K562 (cell line): ENCODE measurements at regions of chr4 and their contacts with region 1.

Region 1: GRCh38 chr4:83455281-83456129 is at the starts of genes HELQ and MRPS18C:
- DNase-seq: peak; percentile 94 to 99 (median 96)
- ATAC-seq: peak; percentile 94
- H3K4me3 ChIP-seq: peak within 1 kb of the TSS; percentile 68
- H3K27ac ChIP-seq: peak within 1 kb of the TSS; percentile 99
- H3K4me1 ChIP-seq: no peaks in the 10 kb centered on the region; a peak in 1 of 5 replicates
- H3K27me3 ChIP-seq: no peaks in the 10 kb centered on the region
- CTCF ChIP-seq: peak; percentile 27 to 37 (median 31); a peak in 3 of 6 replicates
- EP300 ChIP-seq: peak; percentile 64
- POLR2A ChIP-seq: peak; percentile 96
- RAD21 ChIP-seq: peak; percentile 2 to 30; a peak in 1 of 4 replicates
- polyA plus RNA-seq, gene HELQ: 3.5 to 5.6 TPM
- polyA plus RNA-seq, gene MRPS18C: 329 to 390 TPM

Region 2: DNA sequence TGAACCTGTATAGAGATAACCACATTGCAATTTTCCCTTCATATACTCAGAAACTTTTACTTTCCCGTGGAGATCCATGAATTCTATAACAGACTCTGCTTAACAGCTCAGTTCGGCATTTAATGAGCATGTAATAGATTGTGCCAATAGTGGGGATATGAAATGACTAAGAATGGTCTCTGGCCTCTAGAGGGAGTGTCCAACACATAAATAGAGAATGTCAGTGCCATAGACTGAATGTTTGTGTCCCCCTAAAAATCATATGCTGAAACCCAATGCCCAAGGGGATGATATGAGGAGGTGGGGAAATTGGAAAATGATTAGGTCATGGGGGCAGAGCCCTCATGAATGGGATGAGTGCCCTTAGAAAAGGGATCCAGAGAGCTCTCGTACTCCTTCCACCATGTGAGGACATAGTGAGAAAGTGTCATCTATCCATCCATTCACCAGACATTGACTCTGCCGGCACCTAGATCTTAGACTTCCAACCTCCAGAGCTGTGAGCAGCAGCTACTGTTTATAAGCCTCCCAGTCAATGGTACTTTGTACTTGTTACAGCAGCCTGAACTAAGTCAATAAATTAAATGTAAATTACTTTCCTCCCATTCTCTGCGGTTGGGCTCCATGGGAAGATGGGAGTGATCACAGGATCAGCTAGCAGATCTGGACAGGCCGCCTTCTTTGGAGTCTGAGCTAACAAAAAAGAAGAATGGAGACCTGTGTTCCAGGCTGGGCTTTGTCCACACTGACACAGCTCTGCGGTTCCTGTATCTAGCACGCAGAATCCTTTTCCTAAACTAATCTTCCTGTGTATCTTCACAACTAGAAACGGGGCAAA is 92.8 kb before region 1 on chr4:
- CTCF ChIA-PET with region 1: no interaction called
- POLR2A ChIA-PET with region 1: interaction called, 3 read pairs
- in situ Hi-C with region 1: no loop called
- intact Hi-C with region 1: loop called (anchors 2 kb)
- DNase-seq: peak in 2 of 4 experiments; percentile 16 to 38
- ATAC-seq: peak; percentile 86
- H3K4me3 ChIP-seq: no peak overlapping the region
- H3K27ac ChIP-seq: no peak overlapping the region
- H3K4me1 ChIP-seq: peaks cover 0 to 7% of the 10 kb centered on the region in 2 experiments; a peak in 2 of 5 replicates
- H3K27me3 ChIP-seq: peaks cover 0 to 10% of the 10 kb centered on the region in 2 experiments; a peak in 4 of 5 replicates
- CTCF ChIP-seq: peak; percentile 24 to 60 (median 58); a peak in 5 of 6 replicates
- EP300 ChIP-seq: no peak
- POLR2A ChIP-seq: no peak
- RAD21 ChIP-seq: peak; percentile 23 to 57; a peak in 2 of 4 replicates

Region 3: GRCh38 chr4:83440899-83441298 is 14.6 kb before region 1 on chr4:
- CTCF ChIA-PET with region 1: no interaction called
- POLR2A ChIA-PET with region 1: interaction called, 10 read pairs
- in situ Hi-C with region 1: no loop called
- intact Hi-C with region 1: no loop called
- DNase-seq: no peak
- ATAC-seq: no peak
- H3K4me3 ChIP-seq: no peak overlapping the region
- H3K27ac ChIP-seq: no peak overlapping the region
- H3K4me1 ChIP-seq: no peaks in the 10 kb centered on the region
- H3K27me3 ChIP-seq: no peaks in the 10 kb centered on the region
- CTCF ChIP-seq: no peak
- EP300 ChIP-seq: no peak
- POLR2A ChIP-seq: no peak
- RAD21 ChIP-seq: no peak

Region 4: GRCh38 chr4:83498187-83498586 is 42.7 kb after region 1 on chr4:
- CTCF ChIA-PET with region 1: no interaction called
- POLR2A ChIA-PET with region 1: interaction called, 3 read pairs
- in situ Hi-C with region 1: no loop called
- intact Hi-C with region 1: loop called (anchors 5 kb)
- DNase-seq: no peak
- ATAC-seq: no peak
- H3K4me3 ChIP-seq: no peak overlapping the region
- H3K27ac ChIP-seq: no peak overlapping the region
- H3K4me1 ChIP-seq: peaks cover 12 to 13% of the 10 kb centered on the region in 2 experiments; a peak in 4 of 5 replicates
- H3K27me3 ChIP-seq: no peaks in the 10 kb centered on the region
- CTCF ChIP-seq: no peak
- EP300 ChIP-seq: no peak
- POLR2A ChIP-seq: no peak
- RAD21 ChIP-seq: no peak

Region 5: GRCh38 chr4:84966383-84967242 is 1511.1 kb after region 1 on chr4 and contains the start of gene WDFY3:
- CTCF ChIA-PET with region 1: no interaction called
- POLR2A ChIA-PET with region 1: no interaction called
- in situ Hi-C with region 1: no loop called
- intact Hi-C with region 1: no loop called
- DNase-seq: peak; percentile 58 to 83 (median 68)
- ATAC-seq: peak; percentile 92
- H3K4me3 ChIP-seq: peak within 1 kb of the TSS; percentile 63
- H3K27ac ChIP-seq: peak within 1 kb of the TSS; percentile 59
- H3K4me1 ChIP-seq: peaks cover 0 to 15% of the 10 kb centered on the region in 2 experiments; a peak in 3 of 5 replicates
- H3K27me3 ChIP-seq: no peaks in the 10 kb centered on the region
- CTCF ChIP-seq: no peak
- EP300 ChIP-seq: no peak
- POLR2A ChIP-seq: peak; percentile 64
- RAD21 ChIP-seq: no peak
- polyA plus RNA-seq, gene WDFY3: 0.58 to 0.95 TPM